HepG2 (cell line): ENCODE measurements at regions of chr18 and their contacts with region 1.

Region 1: GRCh38 chr18:7259475-7260081 is 28.7 kb downstream of the LRRC30 start:
- DNase-seq: no peak
- ATAC-seq: no peak
- H3K4me3 ChIP-seq: no peak overlapping the region
- H3K27ac ChIP-seq: no peak overlapping the region
- H3K4me1 ChIP-seq: no peaks in the 10 kb centered on the region
- H3K27me3 ChIP-seq: peaks cover 0 to 15% of the 10 kb centered on the region in 2 experiments; a peak in 2 of 5 replicates
- CTCF ChIP-seq: no peak
- EP300 ChIP-seq: no peak
- POLR2A ChIP-seq: no peak
- RAD21 ChIP-seq: no peak

Region 2: GRCh38 chr18:7452331-7452730 is 192.8 kb after region 1 on chr18:
- CTCF ChIA-PET with region 1: no interaction called
- POLR2A ChIA-PET with region 1: no interaction called
- in situ Hi-C with region 1: loop called (anchors 10 kb)
- intact Hi-C with region 1: no loop called
- DNase-seq: peak; percentile 18
- ATAC-seq: peak; percentile 96
- H3K4me3 ChIP-seq: no peak overlapping the region
- H3K27ac ChIP-seq: no peak overlapping the region
- H3K4me1 ChIP-seq: peaks cover 21% of the 10 kb centered on the region
- H3K27me3 ChIP-seq: peaks cover 0 to 4% of the 10 kb centered on the region in 2 experiments; a peak in 3 of 5 replicates
- CTCF ChIP-seq: peak; percentile 64
- EP300 ChIP-seq: no peak
- POLR2A ChIP-seq: no peak
- RAD21 ChIP-seq: no peak